ENCODE measurements at regions of chr22 and their contacts with region 1.

Region 1: DNA sequence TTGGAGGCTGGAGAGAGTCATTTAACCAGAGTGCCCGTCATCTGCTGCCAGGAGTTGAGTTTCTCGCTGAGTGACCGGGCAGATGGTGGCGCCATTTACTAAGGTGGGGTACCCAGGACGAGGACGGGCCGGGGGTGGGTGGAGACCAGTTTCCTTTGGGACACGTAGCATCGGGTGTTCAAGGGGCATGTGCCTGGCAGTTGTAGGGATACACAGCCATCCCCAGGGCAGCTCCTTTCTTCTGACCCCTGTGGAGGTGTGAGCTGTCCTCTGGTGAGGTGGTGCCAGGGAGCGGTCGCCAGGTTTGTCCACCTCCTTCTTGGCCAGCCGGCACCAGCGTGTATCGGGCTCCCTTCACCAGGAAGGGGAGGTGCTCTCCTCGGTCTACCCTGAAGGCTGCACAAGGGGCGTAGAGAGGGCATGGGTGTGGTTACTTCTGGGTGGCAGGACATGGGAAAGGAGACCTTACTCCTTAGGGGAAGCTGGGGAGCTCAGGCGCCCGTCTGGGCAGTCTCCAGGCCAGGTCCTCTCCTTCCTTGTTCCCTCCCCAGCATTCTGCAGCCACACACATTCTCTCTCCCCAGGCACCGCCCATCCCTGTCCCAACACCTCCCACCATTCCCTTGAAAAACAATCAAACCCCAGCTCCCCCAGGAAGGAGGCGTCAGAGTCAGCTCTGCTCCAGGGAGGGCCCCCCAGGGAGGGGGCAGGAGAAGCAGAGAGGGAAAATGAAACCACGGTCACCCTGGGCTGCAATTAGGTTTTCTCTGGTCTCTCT is 10.3 kb upstream of the MB start:
- DNase-seq: no peak
- ATAC-seq: peak; percentile 67

Region 2: GRCh38 chr22:35430897-35431322 is 196.5 kb before region 1 on chr22:
- intact Hi-C with region 1: loop called (anchors 1 kb)
- DNase-seq: peak; percentile 93
- ATAC-seq: peak; percentile 97

Region 3: DNA sequence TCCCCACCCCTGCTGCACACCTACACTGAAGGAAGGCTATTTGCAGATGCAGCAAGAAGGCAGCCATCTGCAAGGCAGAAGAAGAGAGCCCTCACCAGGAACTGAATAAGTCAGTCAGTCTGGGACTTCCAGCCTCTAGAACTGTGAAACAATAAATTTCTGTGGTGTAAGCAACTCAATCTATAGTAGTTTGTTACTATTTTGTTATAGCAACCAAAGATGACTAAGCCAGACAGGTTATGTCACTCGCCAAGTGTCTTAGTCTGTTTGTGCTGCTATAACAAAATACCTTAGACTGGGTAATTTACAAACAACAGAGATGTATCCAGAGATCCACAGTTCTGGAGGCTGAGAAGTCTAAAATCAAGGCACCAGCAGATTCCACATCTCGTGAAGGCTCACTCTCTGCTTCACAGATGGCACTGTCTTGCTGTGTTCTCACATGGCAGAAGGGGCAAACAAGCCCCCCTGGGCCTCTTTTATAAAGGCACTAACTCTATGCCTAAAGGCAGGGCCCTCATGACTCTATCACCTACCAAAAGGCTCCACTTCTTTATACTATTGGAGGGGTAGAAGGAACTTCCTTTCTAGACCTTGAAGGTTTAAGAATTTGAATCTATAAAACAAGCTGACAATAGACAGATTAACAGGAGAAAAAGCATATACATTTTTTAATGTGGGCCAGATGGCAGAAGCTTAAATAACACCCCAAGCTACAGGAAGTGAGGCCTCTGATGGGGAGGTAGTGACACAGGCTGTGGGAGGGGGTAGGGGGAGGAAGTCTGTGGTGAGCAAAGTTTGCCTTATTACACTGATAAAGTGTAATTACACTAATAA is 33.1 kb after region 1 on chr22:
- intact Hi-C with region 1: no loop called
- DNase-seq: no peak
- ATAC-seq: no peak

Region 4: GRCh38 chr22:35840302-35840739 is 212.9 kb after region 1 on chr22:
- intact Hi-C with region 1: loop called (anchors 5 kb)
- DNase-seq: peak; percentile 90
- ATAC-seq: peak; percentile 81

Region 5: GRCh38 chr22:36028646-36029405 is 401.4 kb after region 1 on chr22 and contains the start of gene RBFOX2:
- intact Hi-C with region 1: loop called (anchors 10 kb)
- DNase-seq: peak; percentile 95
- ATAC-seq: peak; percentile 98
- total RNA-seq, gene RBFOX2: 84.4 TPM

Region 6: DNA sequence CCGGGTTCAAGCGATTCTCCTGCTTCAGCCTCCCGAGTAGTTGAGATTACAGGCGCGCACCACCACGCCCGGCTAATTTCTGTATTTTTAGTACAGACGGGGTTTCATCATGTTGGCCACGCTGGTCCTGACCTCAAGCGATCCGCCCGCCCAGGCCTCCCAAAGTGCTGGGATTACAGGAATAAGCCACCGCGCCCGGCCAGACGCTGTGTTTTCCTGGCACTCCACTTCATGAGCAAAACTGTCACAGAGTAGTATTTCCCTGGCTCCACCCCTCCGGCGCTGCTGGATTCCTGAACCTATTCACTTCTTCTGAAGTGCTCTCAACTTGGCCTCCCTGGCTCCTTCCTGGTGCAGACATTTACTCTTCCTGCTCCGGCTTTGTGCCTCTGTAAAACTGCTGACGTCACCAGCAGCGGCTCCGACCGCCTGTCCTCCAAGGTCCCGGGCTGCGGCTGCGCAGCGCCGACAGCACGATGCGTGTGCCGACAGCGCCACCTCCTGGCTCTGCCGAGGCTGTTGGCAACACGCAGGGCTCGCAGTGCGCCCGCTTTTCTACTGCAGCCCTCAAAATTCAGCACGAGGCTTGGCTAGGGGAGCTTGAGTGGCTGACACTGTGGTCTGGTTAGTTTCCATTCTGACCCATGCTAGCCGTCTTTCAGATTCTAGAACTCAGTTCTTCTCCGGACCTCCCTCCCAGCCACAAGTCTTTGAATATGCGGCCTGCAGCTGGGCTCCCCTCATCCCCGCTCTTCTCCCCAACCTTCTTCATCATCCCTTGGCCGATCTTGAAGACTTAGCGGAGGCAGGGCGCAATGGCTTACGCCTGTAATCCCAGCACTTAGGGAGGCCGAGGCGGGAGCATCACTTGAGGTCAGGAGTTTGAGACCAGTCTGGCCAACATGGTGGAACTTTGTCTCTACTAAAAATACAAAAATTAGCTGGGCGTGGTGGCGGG is 496.5 kb after region 1 on chr22:
- intact Hi-C with region 1: loop called (anchors 1 kb)
- DNase-seq: peak; percentile 97
- ATAC-seq: peak; percentile 96

Measured in Right ventricle myocardium inferior (tissue), 1 donor.